ENCODE measurements at regions of chr10 and their contacts with region 1.

Region 1: DNA sequence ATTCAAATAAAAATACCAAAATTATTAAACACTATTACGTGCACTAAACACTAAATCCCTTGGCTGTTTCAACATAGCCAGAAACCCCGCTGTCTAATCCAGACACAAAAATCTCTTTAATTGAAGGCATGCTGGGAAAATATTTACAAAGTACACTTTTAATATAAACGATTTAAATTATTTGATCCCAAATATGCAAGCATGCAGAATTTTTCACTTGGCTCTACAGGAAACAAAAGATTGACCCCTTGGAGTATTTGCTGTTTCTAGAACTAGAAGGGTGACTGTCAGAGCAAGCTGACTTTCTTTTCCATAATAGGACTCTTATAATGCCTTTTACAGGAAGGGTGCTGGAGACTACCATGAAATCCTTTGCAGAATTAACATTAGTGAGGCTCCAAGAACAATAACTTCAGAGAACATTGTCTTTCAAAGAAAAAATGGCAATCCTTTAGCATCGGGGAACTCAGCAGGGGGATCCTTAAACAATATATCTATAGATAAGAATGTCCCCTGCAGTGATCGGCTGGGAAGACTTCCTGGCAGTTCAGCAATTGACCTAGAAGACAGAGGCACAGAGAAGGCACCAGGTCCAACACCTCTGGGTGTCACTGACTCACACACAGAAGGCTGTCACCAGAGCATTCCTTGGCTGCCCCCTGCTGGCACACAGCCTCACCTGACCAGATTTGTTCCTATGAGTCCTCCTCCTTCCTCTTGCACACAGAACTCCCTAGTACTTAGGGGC is 55.8 kb upstream of the MRLN start:
- DNase-seq: peak; percentile 37
- ATAC-seq: peak; percentile 72
- H3K4me3 ChIP-seq: no peak overlapping the region
- H3K27ac ChIP-seq: no peak overlapping the region
- H3K4me1 ChIP-seq: no peaks in the 10 kb centered on the region
- H3K27me3 ChIP-seq: no peaks in the 10 kb centered on the region
- CTCF ChIP-seq: peak; percentile 52
- POLR2A ChIP-seq: no peak
- RAD21 ChIP-seq: peak; percentile 47

Region 2: DNA sequence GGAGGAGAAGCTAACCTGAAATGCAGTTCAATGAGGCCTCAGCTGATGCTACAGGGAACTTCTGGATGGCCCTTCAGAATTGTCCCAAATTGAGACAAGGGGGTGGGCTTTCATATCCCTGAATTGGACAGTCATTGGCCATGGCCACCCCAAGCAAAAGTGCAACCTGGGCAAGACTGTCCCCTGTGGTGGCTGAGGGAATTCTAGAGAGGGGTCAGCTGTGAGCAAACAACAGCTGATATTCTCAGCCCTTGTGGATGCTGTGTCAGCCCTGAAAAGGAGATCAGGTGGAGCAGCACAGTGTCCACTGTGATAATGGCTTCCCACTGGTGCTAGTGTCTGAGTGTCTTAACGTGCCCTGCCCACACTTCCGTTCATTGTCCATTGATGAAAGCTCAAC is 176.0 kb before region 1 on chr10:
- CTCF ChIA-PET with region 1: no interaction called
- POLR2A ChIA-PET with region 1: no interaction called
- dilution Hi-C with region 1: no loop called
- in situ Hi-C with region 1: loop called (anchors 10 kb)
- intact Hi-C with region 1: no loop called
- DNase-seq: no peak
- ATAC-seq: no peak
- H3K4me3 ChIP-seq: no peak overlapping the region
- H3K27ac ChIP-seq: no peak overlapping the region
- H3K4me1 ChIP-seq: no peaks in the 10 kb centered on the region
- H3K27me3 ChIP-seq: peaks cover 10% of the 10 kb centered on the region
- CTCF ChIP-seq: no peak
- POLR2A ChIP-seq: no peak
- RAD21 ChIP-seq: no peak

Region 3: DNA sequence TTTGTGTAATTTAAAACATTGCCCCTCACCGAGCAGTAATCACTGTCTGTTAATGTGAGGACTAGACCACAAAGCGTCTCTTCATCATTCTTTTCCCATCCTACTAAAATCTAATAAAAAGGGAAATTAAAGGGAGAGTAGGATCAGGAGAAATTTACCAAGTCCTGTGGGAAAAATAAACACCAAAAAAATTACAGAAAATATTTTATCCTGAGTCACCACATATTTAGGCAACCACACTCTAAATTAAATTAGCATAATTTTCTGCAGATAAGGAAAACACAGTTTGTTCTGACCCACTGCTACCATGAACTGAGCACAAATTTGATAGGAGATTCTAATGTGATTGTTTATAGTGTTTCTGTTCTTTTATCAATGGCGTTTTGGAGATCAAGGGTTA is 48.0 kb after region 1 on chr10:
- CTCF ChIA-PET with region 1: no interaction called
- POLR2A ChIA-PET with region 1: no interaction called
- dilution Hi-C with region 1: no loop called
- in situ Hi-C with region 1: no loop called
- intact Hi-C with region 1: no loop called
- DNase-seq: peak; percentile 11
- ATAC-seq: peak; percentile 63
- H3K4me3 ChIP-seq: no peak overlapping the region
- H3K27ac ChIP-seq: no peak overlapping the region
- H3K4me1 ChIP-seq: peaks cover 6% of the 10 kb centered on the region
- H3K27me3 ChIP-seq: no peaks in the 10 kb centered on the region
- CTCF ChIP-seq: no peak
- POLR2A ChIP-seq: no peak
- RAD21 ChIP-seq: no peak